ENCODE measurements at regions of chr19 and their contacts with region 1.

Region 1: GRCh38 chr19:46030812-46031550 is 8.1 kb upstream of the PGLYRP1 start:
- DNase-seq: no peak
- H3K4me3 ChIP-seq: no peak overlapping the region
- H3K27ac ChIP-seq: no peak overlapping the region
- H3K4me1 ChIP-seq: no peaks in the 10 kb centered on the region
- H3K27me3 ChIP-seq: no peaks in the 10 kb centered on the region
- CTCF ChIP-seq: no peak
- POLR2A ChIP-seq: no peak

Region 2: GRCh38 chr19:45935267-45935666 is 95.7 kb before region 1 on chr19:
- CTCF ChIA-PET with region 1: no interaction called
- POLR2A ChIA-PET with region 1: no interaction called
- dilution Hi-C with region 1: no loop called
- intact Hi-C with region 1: no loop called
- DNase-seq: no peak
- H3K4me3 ChIP-seq: no peak overlapping the region
- H3K27ac ChIP-seq: no peak overlapping the region
- H3K4me1 ChIP-seq: no peaks in the 10 kb centered on the region
- H3K27me3 ChIP-seq: no peaks in the 10 kb centered on the region
- CTCF ChIP-seq: no peak
- POLR2A ChIP-seq: no peak

Region 3: DNA sequence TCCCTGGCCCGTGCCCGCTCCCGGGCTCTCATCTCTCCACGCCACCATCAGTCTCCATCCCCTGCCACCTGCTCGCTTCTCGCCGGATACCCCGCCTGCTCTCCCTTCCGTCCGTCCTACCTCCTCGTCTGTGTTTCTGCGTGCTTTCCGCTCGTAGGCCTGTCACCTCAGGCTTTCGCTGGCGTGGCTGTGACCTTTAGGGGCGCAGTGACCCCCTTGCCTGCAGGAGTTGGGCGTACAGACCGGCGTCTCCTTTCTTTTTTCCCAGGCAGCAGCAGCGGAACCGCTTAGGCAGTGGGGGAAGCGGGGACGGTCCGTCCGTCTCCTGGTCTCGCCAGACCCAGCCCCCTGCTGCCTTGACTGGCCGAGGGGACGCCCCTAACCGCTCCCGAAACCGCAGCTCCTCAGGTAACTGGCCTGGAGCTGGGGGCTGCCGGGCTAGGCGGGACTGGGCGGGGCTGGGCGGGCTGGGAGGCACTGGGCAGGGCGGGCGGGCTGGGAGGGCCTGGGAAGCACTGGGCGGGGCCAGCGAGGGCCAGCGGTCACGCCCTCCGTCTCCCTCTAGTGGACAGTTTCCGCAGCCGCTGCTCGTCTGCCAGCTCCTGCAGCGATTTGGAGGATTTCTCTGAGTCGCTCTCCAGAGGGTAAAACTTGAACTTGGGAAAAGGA is 14.4 kb before region 1 on chr19:
- CTCF ChIA-PET with region 1: interaction called, 52 read pairs
- POLR2A ChIA-PET with region 1: no interaction called
- dilution Hi-C with region 1: no loop called
- intact Hi-C with region 1: no loop called
- DNase-seq: peak; percentile 76
- H3K4me3 ChIP-seq: peak overlapping the region; percentile 47 to 69 (median 59)
- H3K27ac ChIP-seq: no peak overlapping the region
- H3K4me1 ChIP-seq: peaks cover 11% of the 10 kb centered on the region
- H3K27me3 ChIP-seq: peaks cover 4 to 8% of the 10 kb centered on the region in 2 experiments
- CTCF ChIP-seq: peak; percentile 56 to 86
- POLR2A ChIP-seq: no peak

Region 4: DNA sequence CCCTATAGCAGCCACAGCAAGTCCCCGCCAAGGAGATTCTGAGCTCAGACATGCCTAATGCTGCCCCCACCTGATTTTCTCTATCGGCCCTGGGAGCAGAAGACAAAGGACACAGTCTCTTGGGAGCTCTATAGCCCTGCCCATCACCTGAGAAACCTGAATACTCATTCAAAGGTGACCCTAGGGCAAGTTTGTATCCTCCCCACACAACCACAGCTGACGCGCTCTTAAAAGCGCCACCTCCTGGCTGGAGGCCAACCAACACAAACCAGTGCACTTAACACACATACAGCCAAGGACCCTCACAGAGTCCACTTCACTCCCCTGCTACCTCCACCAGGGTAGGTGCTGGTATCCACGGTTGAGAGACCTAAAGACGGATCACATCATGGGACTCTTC is 18.6 kb after region 1 on chr19:
- CTCF ChIA-PET with region 1: interaction called, 32 read pairs
- POLR2A ChIA-PET with region 1: no interaction called
- dilution Hi-C with region 1: no loop called
- intact Hi-C with region 1: no loop called
- DNase-seq: no peak
- H3K4me3 ChIP-seq: no peak overlapping the region
- H3K27ac ChIP-seq: no peak overlapping the region
- H3K4me1 ChIP-seq: no peaks in the 10 kb centered on the region
- H3K27me3 ChIP-seq: peaks cover 9 to 38% of the 10 kb centered on the region in 2 experiments
- CTCF ChIP-seq: no peak
- POLR2A ChIP-seq: no peak

Region 5: GRCh38 chr19:46068345-46069258 is 37.6 kb after region 1 on chr19:
- CTCF ChIA-PET with region 1: interaction called, 93 read pairs
- POLR2A ChIA-PET with region 1: no interaction called
- dilution Hi-C with region 1: no loop called
- intact Hi-C with region 1: no loop called
- DNase-seq: peak; percentile 79
- H3K4me3 ChIP-seq: no peak overlapping the region
- H3K27ac ChIP-seq: peak overlapping the region; percentile 28
- H3K4me1 ChIP-seq: peaks cover 31% of the 10 kb centered on the region
- H3K27me3 ChIP-seq: no peaks in the 10 kb centered on the region
- CTCF ChIP-seq: no peak
- POLR2A ChIP-seq: no peak

Region 6: DNA sequence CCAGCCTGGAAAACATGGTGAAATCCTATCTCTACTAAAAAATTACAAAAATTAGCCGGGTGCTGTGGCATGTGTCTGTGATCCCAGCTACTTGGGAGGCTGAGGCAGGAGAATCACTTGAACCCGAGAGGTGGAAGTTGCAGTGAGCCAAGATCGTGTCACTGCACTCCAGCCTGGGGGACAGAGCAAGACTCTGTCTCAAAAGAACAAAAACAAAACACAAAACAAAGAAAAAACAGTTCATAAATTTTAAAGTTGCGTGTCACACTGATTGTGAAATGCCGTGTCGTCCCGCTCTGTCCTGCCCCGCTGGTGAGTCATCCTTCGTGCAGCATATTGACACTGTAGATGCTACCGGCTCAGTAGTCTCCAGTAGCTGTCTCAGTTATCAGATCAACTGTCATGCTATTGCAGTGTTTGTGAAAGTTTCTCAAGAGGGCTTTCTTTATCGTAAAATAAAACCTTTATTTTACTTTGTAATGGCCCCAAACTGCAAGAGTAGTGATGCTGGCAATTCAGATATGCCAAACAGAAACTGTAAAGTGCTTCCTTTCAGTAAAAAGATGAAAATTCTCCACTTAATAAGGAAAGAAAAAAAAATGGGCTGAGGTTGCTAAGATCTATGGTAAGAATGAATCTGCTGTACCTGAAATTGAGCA is 162.1 kb after region 1 on chr19:
- CTCF ChIA-PET with region 1: interaction called, 60 read pairs
- POLR2A ChIA-PET with region 1: no interaction called
- dilution Hi-C with region 1: no loop called
- intact Hi-C with region 1: loop called (anchors 1 kb)
- DNase-seq: no peak
- H3K4me3 ChIP-seq: no peak overlapping the region
- H3K27ac ChIP-seq: no peak overlapping the region
- H3K4me1 ChIP-seq: no peaks in the 10 kb centered on the region
- H3K27me3 ChIP-seq: peaks cover 3 to 19% of the 10 kb centered on the region in 2 experiments
- CTCF ChIP-seq: no peak
- POLR2A ChIP-seq: no peak